ENCODE measurements at regions of chr12 and their contacts with region 1.

Region 1: DNA sequence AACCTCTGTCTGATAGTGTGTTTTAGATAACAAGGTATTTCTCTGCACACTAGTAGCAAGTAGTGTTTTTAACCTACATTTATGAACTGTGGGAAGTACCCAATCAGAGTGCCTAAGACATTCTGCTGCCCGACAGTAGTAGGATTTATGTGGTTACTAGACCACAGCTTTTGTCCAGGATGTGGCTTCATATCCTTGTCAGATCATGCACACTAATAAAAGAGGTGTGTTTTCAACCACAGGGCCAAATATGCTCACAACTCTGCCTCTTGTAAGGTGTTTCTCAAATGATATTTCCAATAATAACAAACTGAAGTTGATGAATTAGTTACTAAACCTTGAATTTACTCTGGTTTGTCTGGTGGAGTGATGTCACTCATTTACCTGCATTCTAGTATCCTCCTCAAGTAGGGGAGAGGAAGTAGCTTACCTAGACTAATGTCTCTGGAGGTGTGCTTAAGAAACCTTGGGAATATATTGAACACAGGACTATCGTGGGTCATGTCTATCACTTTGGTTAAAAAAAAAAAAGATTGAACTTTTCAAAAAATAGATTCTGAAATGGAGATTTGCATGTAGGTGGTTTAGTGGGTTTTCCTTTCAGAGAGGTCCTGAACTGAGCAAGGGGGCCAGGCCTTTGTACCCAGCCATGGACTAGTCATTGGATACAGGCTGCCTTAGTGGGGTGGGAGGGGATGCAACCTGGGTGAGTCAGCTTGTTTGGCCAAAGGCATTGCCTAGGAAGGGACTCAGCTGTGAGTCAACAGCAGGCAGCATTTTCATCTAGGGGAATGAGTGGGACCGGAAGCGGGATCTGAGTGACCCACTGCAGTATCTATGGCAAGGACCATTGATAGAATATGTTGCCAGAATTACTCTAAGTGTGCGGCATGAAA is 14.1 kb downstream of the FBXW8 start:
- DNase-seq: peak; percentile 67
- ATAC-seq: peak; percentile 75
- H3K4me3 Mint-ChIP-seq: no peak overlapping the region
- H3K27ac Mint-ChIP-seq: peak overlapping the region; percentile 76
- H3K4me1 Mint-ChIP-seq: peaks cover 68% of the 10 kb centered on the region
- H3K27me3 Mint-ChIP-seq: peaks cover 12% of the 10 kb centered on the region

Region 2: DNA sequence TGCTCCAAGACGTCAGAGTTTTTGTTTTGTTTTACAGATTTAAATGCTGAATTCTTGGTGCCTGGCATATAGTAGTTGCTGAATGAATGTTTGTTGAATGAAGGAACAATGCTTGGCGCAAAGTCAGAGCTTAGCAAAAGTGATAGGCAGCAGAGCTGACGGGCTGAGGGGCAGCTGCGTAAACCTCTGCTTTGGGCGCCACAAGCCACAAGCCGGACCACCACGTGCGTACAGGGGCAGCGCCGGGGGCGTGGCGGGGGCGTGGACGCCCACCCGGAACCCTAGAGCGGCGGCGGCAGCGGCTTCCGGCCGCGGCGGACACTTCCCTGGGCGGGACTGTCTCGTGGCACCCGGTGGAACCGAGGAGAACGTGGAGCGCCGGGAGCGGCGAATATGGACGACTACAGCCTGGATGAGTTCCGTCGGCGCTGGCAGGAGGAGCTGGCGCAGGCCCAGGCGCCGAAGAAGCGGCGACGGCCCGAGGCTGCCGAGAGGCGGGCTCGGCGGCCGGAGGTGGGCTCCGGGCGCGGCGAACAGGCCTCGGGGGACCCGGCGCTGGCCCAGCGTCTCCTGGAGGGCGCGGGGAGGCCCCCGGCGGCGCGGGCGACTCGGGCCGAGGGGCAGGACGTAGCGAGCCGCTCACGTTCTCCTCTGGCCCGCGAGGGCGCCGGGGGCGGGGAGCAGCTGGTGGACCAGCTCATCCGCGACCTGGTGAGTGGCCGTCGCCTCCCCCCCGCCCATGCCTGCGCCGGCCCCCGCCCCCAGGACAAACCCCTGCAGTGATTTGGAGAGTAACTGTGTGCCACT is 14.0 kb before region 1 on chr12 and contains the start of gene FBXW8:
- CTCF ChIA-PET with region 1: interaction called, 6 read pairs
- POLR2A ChIA-PET with region 1: no interaction called
- intact Hi-C with region 1: loop called (anchors 1 to 2 kb)
- DNase-seq: peak; percentile 69
- ATAC-seq: peak; percentile 80
- H3K4me3 Mint-ChIP-seq: peak within 1 kb of the TSS; percentile 79
- H3K27ac Mint-ChIP-seq: peak within 1 kb of the TSS; percentile 88
- H3K4me1 Mint-ChIP-seq: peaks cover 26% of the 10 kb centered on the region
- H3K27me3 Mint-ChIP-seq: peaks cover 1% of the 10 kb centered on the region
- total RNA-seq, gene FBXW8: 5.7 to 6.1 TPM

Region 3: DNA sequence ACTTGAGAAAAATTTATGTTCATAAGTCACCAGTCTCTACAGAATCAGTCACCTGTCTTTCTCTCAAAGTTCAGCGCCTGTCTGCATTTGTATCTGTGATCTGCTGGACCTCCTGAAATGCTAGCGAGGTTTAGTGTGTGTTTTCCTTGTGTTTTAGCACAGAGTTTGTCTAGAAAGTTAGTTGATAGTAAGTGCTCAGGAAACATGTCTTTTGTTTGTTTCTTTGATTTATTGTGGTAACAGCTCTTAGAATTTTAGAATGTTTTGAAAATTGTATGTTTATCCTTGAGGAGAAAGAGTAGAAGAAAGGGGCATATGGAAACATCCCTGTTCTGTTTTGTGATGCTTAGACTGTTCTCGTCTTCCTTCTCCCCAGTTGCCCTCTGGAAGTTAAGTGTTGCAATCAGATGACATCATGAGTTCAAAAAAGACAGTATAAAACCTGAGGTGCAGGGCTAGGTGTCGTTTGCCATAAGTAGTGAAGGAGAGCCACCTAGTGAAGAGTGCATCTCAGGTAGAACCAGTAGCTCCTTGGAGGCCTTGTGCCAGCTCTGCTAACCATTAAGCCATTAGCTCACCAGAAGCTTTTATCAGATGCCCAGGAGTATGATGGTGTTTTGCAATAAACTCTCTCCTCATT is 30.7 kb after region 1 on chr12:
- CTCF ChIA-PET with region 1: interaction called, 5 read pairs
- POLR2A ChIA-PET with region 1: no interaction called
- intact Hi-C with region 1: loop called (anchors 1 kb)
- DNase-seq: peak; percentile 14
- ATAC-seq: no peak
- H3K4me3 Mint-ChIP-seq: no peak overlapping the region
- H3K27ac Mint-ChIP-seq: no peak overlapping the region
- H3K4me1 Mint-ChIP-seq: peaks cover 21% of the 10 kb centered on the region
- H3K27me3 Mint-ChIP-seq: no peaks in the 10 kb centered on the region

Measured in activated CD4-positive, alpha-beta T cell treated with anti-CD3 and anti-CD28 coated beads for 36 hours (primary cell).